Caco-2 (cell line): ENCODE measurements at regions of chr14 and their contacts with region 1.

Region 1: DNA sequence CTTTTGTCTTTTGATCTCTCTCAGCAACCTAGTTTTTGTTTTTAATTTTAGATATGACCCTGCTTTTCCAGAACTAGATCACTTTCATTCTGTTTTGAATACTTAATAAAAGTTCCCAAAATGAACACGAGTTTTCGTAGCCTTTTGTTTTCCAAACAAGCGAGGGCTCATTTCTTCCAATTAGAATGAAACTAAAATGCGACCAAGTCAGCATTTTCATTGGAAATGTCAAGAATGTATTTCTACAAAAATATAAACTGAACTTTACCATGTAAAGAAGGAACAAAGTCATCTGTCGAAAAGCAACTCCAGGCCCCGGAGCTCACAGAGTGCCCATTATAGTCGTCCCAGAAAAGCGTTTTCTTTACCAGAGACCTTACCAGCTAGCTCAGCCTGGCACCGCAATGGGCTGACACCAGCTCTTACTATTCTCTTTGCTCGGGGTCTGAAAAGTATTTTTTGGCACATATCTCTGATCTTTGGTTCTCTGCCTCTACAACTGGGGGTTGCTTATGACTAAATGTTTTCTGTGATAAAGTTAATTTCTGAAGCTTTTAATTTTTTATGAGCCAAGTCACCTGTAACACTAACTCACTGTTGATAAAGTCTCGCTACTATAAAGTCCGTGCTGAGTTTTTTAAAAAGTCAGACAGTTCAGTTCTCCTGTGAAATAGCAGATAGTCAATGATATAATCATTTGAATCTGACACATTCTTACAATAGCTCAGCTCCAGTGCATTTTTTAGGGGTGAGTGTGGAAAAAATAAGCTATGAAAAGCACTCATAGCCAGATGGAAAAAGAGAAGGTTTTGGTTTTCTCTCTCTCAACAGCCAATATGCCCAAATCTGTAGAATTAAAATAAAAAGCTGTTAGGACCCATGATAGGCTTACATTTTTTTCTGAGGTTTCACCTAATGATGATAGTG is 43.4 kb downstream of the SAMD4A start:
- DNase-seq: no peak
- H3K4me3 ChIP-seq: no peak overlapping the region
- H3K4me3 Mint-ChIP-seq: no peak overlapping the region
- H3K27ac Mint-ChIP-seq: no peak overlapping the region
- H3K4me1 ChIP-seq: no peaks in the 10 kb centered on the region; the same call in 1 of the 2 replicates
- H3K4me1 Mint-ChIP-seq: peaks cover 18% of the 10 kb centered on the region
- H3K27me3 ChIP-seq: no peaks in the 10 kb centered on the region
- H3K27me3 Mint-ChIP-seq: no peaks in the 10 kb centered on the region
- CTCF ChIP-seq: no peak

Region 2: DNA sequence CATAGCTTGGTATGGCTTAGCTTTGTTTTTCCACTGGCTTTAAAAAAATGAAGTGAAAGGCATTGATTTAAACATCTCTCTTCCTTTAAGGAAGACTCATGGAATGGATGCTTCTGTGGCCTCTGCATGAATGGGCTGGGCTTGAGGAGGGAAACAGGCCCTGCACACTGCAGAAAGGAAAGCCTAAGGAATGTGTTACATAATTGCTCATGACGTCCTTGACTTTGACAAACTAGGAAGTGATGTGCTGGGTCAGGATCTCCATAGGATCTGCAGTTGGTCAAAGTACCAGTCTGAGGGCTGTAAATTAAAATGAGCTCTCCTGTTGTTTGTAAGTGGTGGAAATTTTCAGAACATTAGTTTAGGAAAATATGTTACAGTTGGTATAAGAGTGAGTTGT is 30.7 kb before region 1 on chr14:
- CTCF ChIA-PET with region 1: no interaction called
- POLR2A ChIA-PET with region 1: no interaction called
- intact Hi-C with region 1: loop called (anchors 5 kb)
- DNase-seq: no peak
- H3K4me3 ChIP-seq: no peak overlapping the region
- H3K4me3 Mint-ChIP-seq: no peak overlapping the region
- H3K27ac Mint-ChIP-seq: no peak overlapping the region
- H3K4me1 ChIP-seq: peaks cover 31% of the 10 kb centered on the region
- H3K4me1 Mint-ChIP-seq: peaks cover 36% of the 10 kb centered on the region
- H3K27me3 ChIP-seq: no peaks in the 10 kb centered on the region
- H3K27me3 Mint-ChIP-seq: no peaks in the 10 kb centered on the region
- CTCF ChIP-seq: no peak